Aorta (tissue), 5 donors: ENCODE measurements at regions of chr19 and their contacts with region 1.

Region 1: DNA sequence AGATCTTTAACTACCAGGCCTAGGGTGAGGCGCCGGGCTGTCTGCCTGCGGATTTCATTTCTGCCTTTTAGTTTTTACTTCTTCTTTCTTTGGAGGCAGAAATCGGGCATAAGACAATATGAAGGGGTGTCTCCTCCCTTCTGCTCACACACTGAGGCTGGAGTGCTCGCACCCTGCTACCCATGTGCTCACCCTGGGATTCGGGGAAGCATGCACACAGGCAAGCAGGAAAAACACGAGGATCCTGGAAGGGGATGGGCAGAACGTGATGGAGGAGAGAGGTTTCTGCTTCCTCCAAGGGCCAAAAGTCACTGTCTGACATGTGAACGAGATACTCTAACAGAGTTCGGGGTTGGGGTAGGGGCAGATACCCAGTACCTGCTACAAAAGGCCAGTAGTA is 28.4 kb downstream of the ZNF823 start:
- DNase-seq: no peak
- ATAC-seq: no peak
- H3K4me3 ChIP-seq: no peak overlapping the region
- H3K27ac ChIP-seq: no peak overlapping the region
- H3K4me1 ChIP-seq: no peaks in the 10 kb centered on the region
- H3K27me3 ChIP-seq: no peaks in the 10 kb centered on the region

Region 2: GRCh38 chr19:11624069-11624463 is 86.2 kb before region 1 on chr19:
- intact Hi-C with region 1: no loop called
- DNase-seq: no peak
- ATAC-seq: peak; percentile 67
- H3K4me3 ChIP-seq: no peak overlapping the region
- H3K27ac ChIP-seq: no peak overlapping the region
- H3K4me1 ChIP-seq: no peaks in the 10 kb centered on the region
- H3K27me3 ChIP-seq: no peaks in the 10 kb centered on the region

Region 3: DNA sequence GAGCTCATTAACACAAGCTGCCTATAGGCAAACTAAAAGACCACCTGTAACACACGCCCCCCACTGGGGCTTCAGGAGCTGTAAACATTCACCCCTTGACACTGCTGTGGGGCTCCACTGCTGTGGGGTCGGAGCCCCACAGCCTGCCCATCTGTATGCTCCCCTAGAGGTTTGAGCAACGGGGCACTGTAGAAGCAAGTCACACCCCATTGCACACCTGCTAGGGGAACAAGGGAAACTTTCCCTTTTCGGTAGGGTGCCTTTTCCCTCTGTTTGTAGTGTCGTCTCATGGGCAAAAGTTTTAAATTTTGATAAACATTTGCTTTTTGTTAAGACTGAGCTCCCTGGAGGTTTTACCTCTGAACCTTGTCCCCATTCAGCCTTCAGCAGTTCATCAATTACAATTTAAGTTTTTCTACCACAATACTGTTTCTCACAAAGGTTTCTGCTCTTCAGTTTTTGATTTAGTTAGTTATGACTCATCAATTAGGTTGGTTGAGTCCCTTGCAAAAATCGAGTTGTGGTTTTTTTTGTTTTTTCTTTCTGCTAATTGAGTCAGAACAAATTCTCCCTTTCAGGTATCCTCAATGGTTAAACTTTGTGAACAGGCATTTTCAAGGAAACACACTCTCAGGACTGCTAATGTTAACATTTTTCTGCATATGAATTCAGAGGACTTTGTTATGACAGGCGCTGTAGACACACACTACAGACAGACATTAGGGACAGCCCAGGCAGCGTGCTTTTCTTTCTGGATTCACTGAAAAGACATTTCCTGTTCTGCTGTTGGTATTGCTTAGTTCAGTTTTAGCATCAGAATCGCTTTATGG is 290.1 kb after region 1 on chr19:
- intact Hi-C with region 1: loop called in 1 of 2 experiments (anchors 10 kb)
- DNase-seq: no peak
- ATAC-seq: no peak
- H3K4me3 ChIP-seq: no peak overlapping the region
- H3K27ac ChIP-seq: no peak overlapping the region
- H3K4me1 ChIP-seq: no peaks in the 10 kb centered on the region
- H3K27me3 ChIP-seq: no peaks in the 10 kb centered on the region